Activated CD4-positive, alpha-beta T cell treated with anti-CD3 and anti-CD28 coated beads, Interleukin-2, amount 10 ng/mL, durations not matched to agents 24 days and 14 days (primary cell): ENCODE measurements at regions of chr20 and their contacts with region 1.

Region 1: GRCh38 chr20:49676581-49677291 is 36.9 kb downstream of the B4GALT5 start:
- DNase-seq: peak; percentile 84
- H3K4me3 Mint-ChIP-seq: peak overlapping the region; percentile 60
- H3K27ac Mint-ChIP-seq: peak overlapping the region; percentile 84
- H3K4me1 Mint-ChIP-seq: peaks cover 69% of the 10 kb centered on the region
- H3K27me3 Mint-ChIP-seq: no peaks in the 10 kb centered on the region

Region 2: GRCh38 chr20:49687595-49688567 is 11.1 kb after region 1 on chr20:
- intact Hi-C with region 1: no loop called
- DNase-seq: no peak
- H3K4me3 Mint-ChIP-seq: no peak overlapping the region
- H3K27ac Mint-ChIP-seq: peak overlapping the region; percentile 48
- H3K4me1 Mint-ChIP-seq: peaks cover 24% of the 10 kb centered on the region
- H3K27me3 Mint-ChIP-seq: no peaks in the 10 kb centered on the region

Region 3: GRCh38 chr20:49699200-49699992 is 22.7 kb after region 1 on chr20:
- intact Hi-C with region 1: loop called (anchors 2 kb)
- DNase-seq: no peak
- H3K4me3 Mint-ChIP-seq: peak overlapping the region; percentile 8
- H3K27ac Mint-ChIP-seq: peak overlapping the region; percentile 49
- H3K4me1 Mint-ChIP-seq: peaks cover 52% of the 10 kb centered on the region
- H3K27me3 Mint-ChIP-seq: no peaks in the 10 kb centered on the region

Region 4: GRCh38 chr20:49713753-49714712 is 37.3 kb after region 1 on chr20 and contains the start of gene B4GALT5:
- intact Hi-C with region 1: loop called (anchors 5 kb)
- DNase-seq: peak; percentile 92
- H3K4me3 Mint-ChIP-seq: peak within 1 kb of the TSS; percentile 94
- H3K27ac Mint-ChIP-seq: peak within 1 kb of the TSS; percentile 91
- H3K4me1 Mint-ChIP-seq: peaks cover 30% of the 10 kb centered on the region
- H3K27me3 Mint-ChIP-seq: no peaks in the 10 kb centered on the region
- total RNA-seq, gene B4GALT5: 39.0 and 39.1 TPM in 2 replicates

Region 5: GRCh38 chr20:49775229-49775693 is 98.5 kb after region 1 on chr20:
- intact Hi-C with region 1: loop called (anchors 10 kb)
- DNase-seq: no peak
- H3K4me3 Mint-ChIP-seq: no peak overlapping the region
- H3K27ac Mint-ChIP-seq: no peak overlapping the region
- H3K4me1 Mint-ChIP-seq: peaks cover 30% of the 10 kb centered on the region
- H3K27me3 Mint-ChIP-seq: peaks cover 10% of the 10 kb centered on the region

Region 6: GRCh38 chr20:49821870-49822331 is 145.2 kb after region 1 on chr20:
- intact Hi-C with region 1: loop called (anchors 5 kb)
- DNase-seq: peak; percentile 58
- H3K4me3 Mint-ChIP-seq: peak overlapping the region; percentile 56
- H3K27ac Mint-ChIP-seq: peak overlapping the region; percentile 72
- H3K4me1 Mint-ChIP-seq: peaks cover 46% of the 10 kb centered on the region
- H3K27me3 Mint-ChIP-seq: no peaks in the 10 kb centered on the region